ENCODE measurements at regions of chr10 and their contacts with region 1.

Region 1: DNA sequence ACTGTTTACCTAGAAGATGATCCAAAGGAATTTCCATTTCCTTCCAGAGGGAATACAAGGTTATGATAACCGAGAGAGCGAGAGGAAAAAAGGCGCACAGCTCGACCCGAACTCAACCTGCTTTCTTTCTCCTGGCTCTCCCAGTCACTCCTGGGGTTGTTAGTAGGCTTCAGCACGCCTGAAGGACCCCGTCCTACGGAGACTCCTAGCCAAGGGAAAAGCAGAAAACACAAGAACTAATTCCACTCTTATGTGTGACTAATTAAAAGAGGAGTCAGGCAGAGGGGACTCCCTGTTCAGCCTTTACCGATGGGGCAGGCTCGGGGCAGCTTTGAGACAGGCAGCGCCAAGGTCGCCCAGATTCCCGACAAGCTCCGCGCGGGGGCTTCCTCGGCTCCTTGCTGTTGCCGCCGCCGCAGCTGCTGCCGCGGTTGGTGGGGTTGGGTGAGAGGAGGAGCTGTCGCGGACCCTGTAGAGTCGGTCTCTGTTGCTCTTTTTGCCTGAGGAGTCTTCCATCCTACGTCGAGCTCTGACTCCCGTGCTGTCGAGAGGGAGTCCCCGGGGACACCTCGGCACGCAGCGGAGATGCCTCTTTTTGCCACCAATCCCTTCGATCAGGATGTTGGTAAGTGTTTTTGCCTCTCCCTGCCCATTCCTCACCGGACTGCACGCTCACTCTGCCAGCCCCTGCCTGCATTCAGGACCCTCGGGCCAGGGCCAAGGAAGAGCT is at the start of gene STAM:
- DNase-seq: peak; percentile 87

Region 2: GRCh38 chr10:17617031-17617911 is 26.6 kb before region 1 on chr10 and contains the start of gene HACD1:
- CTCF ChIA-PET with region 1: no interaction called
- POLR2A ChIA-PET with region 1: interaction called, 46 read pairs
- DNase-seq: peak; percentile 80

Region 3: DNA sequence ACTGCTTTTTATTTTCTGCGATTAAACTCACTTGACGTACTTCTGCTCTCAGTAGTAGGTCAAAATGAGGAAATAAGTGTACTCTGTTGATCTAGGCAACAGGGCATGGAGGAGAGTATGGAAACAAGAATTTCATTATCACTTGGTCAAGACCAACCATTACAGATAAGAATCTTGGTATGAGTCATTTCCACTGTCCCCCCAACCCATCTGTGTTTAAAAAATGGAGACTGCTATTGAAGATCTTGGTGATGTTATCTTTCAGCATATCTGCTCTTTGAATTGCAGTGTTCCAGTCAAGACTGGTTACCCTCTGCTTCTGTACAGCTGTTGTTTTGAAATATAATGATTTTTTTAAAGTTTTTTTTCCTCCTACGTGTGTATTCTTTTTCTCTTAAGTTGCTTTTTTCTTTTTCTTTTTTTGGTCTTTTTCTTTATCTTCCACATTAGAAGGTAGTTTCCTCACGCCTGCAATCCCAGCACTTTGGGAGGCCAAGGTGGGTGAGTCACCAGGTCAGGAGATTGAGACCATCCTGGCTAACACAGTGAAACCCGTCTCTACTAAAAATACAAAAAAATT is 11.7 kb after region 1 on chr10:
- CTCF ChIA-PET with region 1: interaction called, 3 read pairs
- POLR2A ChIA-PET with region 1: interaction called, 25 read pairs
- DNase-seq: no peak

Region 4: DNA sequence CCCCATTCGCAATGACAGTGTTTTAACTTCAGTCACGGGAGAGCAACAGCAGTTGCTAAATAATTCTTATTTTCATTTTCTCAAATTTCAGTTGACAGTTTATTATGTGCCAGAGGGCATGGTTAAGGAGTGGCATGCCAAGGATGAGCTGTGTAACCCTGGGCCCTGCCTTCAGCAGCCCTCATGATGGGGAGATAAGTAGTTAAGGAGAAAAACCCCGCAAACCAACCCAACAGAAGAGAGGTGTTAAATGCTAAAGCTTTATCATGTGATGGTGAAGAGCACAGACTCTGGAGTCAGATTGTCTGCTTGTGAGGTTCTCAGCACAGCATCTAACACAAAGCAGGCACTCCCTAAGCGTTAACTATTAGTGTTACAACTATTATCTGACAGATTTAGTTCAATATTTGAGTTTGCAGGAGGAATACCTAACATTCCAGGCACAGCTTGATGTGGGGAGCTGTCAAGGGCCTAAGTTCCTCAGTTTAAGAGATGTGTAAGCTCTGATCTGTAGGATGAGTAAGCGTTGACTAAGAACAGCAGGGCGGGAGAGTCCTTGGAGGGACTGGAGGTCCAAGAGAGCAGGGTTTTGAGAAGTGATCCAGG is 29.6 kb after region 1 on chr10:
- CTCF ChIA-PET with region 1: no interaction called
- POLR2A ChIA-PET with region 1: interaction called, 11 read pairs
- DNase-seq: no peak

Region 5: DNA sequence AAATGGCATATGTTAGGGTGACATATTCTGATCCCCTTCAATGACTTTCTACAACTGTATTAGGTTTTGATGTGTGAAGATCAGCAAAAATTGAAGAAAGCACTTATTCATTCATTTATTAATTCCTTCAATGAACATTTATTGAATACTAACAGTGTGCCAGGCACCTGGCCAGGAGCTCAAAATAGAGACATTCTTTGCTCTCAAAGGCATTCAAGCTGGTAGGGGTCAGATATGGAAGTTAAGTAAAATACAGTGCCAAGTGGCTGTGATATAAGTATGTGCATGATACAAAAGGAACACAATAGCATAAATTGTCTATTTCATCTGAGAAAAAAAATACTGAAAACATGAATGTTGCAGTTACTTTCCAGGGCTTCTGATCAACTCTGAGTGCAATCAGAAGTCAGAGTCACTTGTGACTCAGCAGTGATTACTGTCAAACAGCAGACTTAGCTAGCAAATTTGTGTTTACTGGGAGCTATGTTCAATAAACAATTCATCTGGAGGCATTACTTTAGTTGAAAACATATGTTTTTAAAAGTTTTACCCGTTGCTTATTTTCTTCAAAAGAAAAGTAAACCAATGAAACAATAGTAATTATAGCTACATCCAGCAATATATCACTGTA is 435.9 kb after region 1 on chr10:
- CTCF ChIA-PET with region 1: no interaction called
- POLR2A ChIA-PET with region 1: no interaction called
- DNase-seq: no peak

Measured in HEK293T (cell line).